ENCODE measurements at regions of chr20 and their contacts with region 1.

Region 1: GRCh38 chr20:16283992-16284742 is 289.1 kb downstream of the KIF16B start:
- DNase-seq: peak; percentile 86 to 88
- ATAC-seq: peak; percentile 93 to 96
- H3K4me3 ChIP-seq: no peak overlapping the region
- H3K27ac ChIP-seq: peak overlapping the region; percentile 78 to 89 (median 84)
- H3K4me1 ChIP-seq: peaks cover 16 to 20% of the 10 kb centered on the region in 2 donors
- H3K27me3 ChIP-seq: no peaks in the 10 kb centered on the region
- CTCF ChIP-seq: no peak
- POLR2A ChIP-seq: no peak

Region 2: GRCh38 chr20:16262594-16262993 is 21.6 kb before region 1 on chr20:
- in situ Hi-C with region 1: no loop called
- intact Hi-C with region 1: loop called (anchors 1 kb)
- DNase-seq: no peak
- ATAC-seq: no peak
- H3K4me3 ChIP-seq: no peak overlapping the region
- H3K27ac ChIP-seq: no peak overlapping the region
- H3K4me1 ChIP-seq: peaks cover 0 to 4% of the 10 kb centered on the region in 2 donors
- H3K27me3 ChIP-seq: no peaks in the 10 kb centered on the region
- CTCF ChIP-seq: no peak
- POLR2A ChIP-seq: no peak

Region 3: GRCh38 chr20:16476032-16476431 is 191.9 kb after region 1 on chr20:
- in situ Hi-C with region 1: no loop called
- intact Hi-C with region 1: loop called (anchors 5 kb)
- DNase-seq: peak in 1 of 2 donors; percentile 12
- ATAC-seq: peak; percentile 75 to 77
- H3K4me3 ChIP-seq: no peak overlapping the region
- H3K27ac ChIP-seq: peak overlapping the region in 3 of 4 donors; percentile 52 to 82 (median 71)
- H3K4me1 ChIP-seq: peaks cover 23% of the 10 kb centered on the region in 2 donors
- H3K27me3 ChIP-seq: no peaks in the 10 kb centered on the region
- CTCF ChIP-seq: peak; percentile 53 to 78 (median 63)
- POLR2A ChIP-seq: no peak

Measured in gastrocnemius medialis (tissue), 4 donors.